Endothelial cell of umbilical vein (primary cell): ENCODE measurements at regions of chr17 and their contacts with region 1.

Region 1: GRCh38 chr17:5526821-5527598 is 40.6 kb downstream of the MIS12 start:
- DNase-seq: peak; percentile 97
- H3K4me3 ChIP-seq: no peak overlapping the region
- H3K27ac ChIP-seq: peak overlapping the region; percentile 96
- H3K4me1 ChIP-seq: peaks cover 18% of the 10 kb centered on the region
- H3K27me3 ChIP-seq: no peaks in the 10 kb centered on the region
- CTCF ChIP-seq: no peak
- POLR2A ChIP-seq: peak; percentile 60

Region 2: DNA sequence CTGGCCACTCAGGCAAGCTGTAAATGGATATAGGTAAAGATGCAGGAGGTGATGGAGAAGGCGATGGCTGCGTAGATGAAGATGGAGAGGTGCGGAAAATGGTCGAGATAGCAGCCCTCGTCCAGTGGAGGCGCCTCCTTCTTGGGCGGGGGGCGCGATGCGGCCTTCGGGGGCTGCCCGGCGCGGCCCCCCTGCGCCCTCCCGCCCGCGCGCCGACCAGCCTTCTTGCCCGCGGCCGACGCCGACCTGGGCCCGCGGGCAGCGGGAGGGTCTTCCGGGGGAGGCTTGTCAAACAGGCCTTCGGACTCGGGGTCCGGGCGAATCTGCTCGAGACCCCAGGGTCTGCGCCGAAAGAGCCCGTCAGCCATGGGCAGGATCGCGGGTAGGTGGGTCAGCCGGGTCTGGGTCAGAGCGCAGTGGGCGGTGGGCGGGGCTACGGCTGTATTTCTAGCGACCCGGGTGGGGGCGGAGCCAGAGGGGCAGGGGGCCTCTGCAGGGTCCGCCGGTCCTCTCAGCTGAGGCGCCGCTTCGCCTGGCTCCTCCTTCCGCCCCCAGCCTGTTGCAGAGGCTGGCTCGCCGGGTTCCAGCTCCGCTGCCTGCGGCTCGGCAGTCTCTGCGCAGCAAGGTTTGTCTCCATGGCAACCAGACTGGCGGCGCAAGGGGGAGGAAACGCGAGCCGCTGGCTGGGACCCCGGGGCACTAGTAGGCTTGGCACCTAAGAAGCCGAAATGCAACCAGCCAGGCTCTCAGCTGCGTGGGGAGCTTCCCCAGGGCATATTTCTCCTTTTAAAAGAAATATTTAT is 26.2 kb before region 1 on chr17:
- CTCF ChIA-PET with region 1: interaction called, 7 read pairs
- POLR2A ChIA-PET with region 1: interaction called, 3 read pairs
- dilution Hi-C with region 1: no loop called
- intact Hi-C with region 1: loop called (anchors 1 kb)
- DNase-seq: peak; percentile 85
- H3K4me3 ChIP-seq: peak overlapping the region; percentile 30 to 79 (median 56)
- H3K27ac ChIP-seq: no peak overlapping the region
- H3K4me1 ChIP-seq: peaks cover 5% of the 10 kb centered on the region
- H3K27me3 ChIP-seq: no peaks in the 10 kb centered on the region
- CTCF ChIP-seq: no peak
- POLR2A ChIP-seq: peak; percentile 23

Region 3: GRCh38 chr17:5598457-5598856 is 71.4 kb after region 1 on chr17:
- CTCF ChIA-PET with region 1: no interaction called
- POLR2A ChIA-PET with region 1: no interaction called
- dilution Hi-C with region 1: no loop called
- intact Hi-C with region 1: no loop called
- DNase-seq: no peak
- H3K4me3 ChIP-seq: no peak overlapping the region
- H3K27ac ChIP-seq: no peak overlapping the region
- H3K4me1 ChIP-seq: no peaks in the 10 kb centered on the region
- H3K27me3 ChIP-seq: peaks cover 11% of the 10 kb centered on the region in 2 experiments
- CTCF ChIP-seq: no peak
- POLR2A ChIP-seq: no peak

Region 4: GRCh38 chr17:5667871-5668270 is 140.9 kb after region 1 on chr17:
- CTCF ChIA-PET with region 1: no interaction called
- POLR2A ChIA-PET with region 1: no interaction called
- dilution Hi-C with region 1: no loop called
- intact Hi-C with region 1: no loop called
- DNase-seq: no peak
- H3K4me3 ChIP-seq: no peak overlapping the region
- H3K27ac ChIP-seq: no peak overlapping the region
- H3K4me1 ChIP-seq: peaks cover 3% of the 10 kb centered on the region
- H3K27me3 ChIP-seq: peaks cover 1 to 2% of the 10 kb centered on the region in 2 experiments
- CTCF ChIP-seq: peak; percentile 22 to 28
- POLR2A ChIP-seq: no peak